CD4-positive, alpha-beta T cell (primary cell): ENCODE measurements at regions of chr6 and their contacts with region 1.

Region 1: GRCh38 chr6:27177485-27178406 is 69.8 kb upstream of the PRSS16 start:
- DNase-seq: peak; percentile 44 to 90 (median 64)
- ATAC-seq: peak; percentile 64
- H3K4me3 ChIP-seq: peak overlapping the region; percentile 89
- H3K4me3 Mint-ChIP-seq: peak overlapping the region; percentile 99
- H3K27ac ChIP-seq: peak overlapping the region; percentile 27 to 63
- H3K27ac Mint-ChIP-seq: peak overlapping the region; percentile 100
- H3K4me1 ChIP-seq: peaks cover 21% of the 10 kb centered on the region
- H3K4me1 Mint-ChIP-seq: peaks cover 24% of the 10 kb centered on the region
- H3K27me3 ChIP-seq: no peaks in the 10 kb centered on the region
- H3K27me3 Mint-ChIP-seq: peaks cover 24% of the 10 kb centered on the region
- CTCF ChIP-seq: peak; percentile 54

Region 2: DNA sequence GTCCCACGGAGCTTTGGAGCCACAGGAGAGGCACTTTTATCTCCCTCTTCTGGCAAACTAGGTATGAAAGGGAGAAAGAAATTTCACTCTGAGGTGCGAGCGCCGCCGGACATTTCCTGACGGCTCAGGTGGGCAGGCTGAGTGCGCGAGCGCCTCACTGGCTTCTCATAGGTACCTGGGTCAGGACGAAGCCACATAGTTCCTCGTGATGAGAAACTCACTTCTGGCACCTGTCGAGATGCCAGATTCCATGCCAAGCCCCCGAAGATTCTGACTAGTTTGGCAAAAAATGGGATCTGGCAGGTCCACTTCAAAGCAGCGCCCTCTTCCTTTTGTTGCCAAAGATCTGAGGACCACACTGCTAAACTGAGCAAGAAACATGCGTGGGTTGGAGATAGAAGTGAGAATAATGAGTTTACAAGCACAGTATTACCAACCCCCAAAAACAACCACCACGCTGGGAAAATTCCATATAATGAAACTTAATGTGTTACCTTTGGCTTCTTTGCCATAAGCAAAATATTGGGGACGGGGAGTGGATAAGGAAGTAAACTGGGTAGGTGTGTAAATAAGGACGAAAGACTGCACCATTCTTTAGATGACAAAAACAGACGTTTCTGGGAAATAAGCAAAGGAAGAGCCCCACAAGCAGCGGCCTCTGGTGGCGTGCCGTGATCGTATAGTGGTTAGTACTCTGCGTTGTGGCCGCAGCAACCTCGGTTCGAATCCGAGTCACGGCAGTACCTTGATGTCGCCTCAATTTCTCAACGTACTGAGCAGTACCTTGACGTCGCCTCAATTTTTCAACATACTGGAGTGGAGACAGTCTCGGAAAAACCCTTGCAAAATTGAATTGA is 20.1 kb before region 1 on chr6:
- CTCF ChIA-PET with region 1: interaction called, 14 read pairs
- POLR2A ChIA-PET with region 1: interaction called, 4 read pairs
- intact Hi-C with region 1: loop called (anchors 2 kb)
- DNase-seq: peak; percentile 73 to 93 (median 85)
- ATAC-seq: peak; percentile 88
- H3K4me3 ChIP-seq: peak overlapping the region; percentile 59
- H3K4me3 Mint-ChIP-seq: peak overlapping the region; percentile 90
- H3K27ac ChIP-seq: peak overlapping the region in 1 of 2 donors; percentile 32
- H3K27ac Mint-ChIP-seq: peak overlapping the region; percentile 96
- H3K4me1 ChIP-seq: peaks cover 22% of the 10 kb centered on the region
- H3K4me1 Mint-ChIP-seq: peaks cover 44% of the 10 kb centered on the region
- H3K27me3 ChIP-seq: no peaks in the 10 kb centered on the region
- H3K27me3 Mint-ChIP-seq: peaks cover 7% of the 10 kb centered on the region
- CTCF ChIP-seq: peak; percentile 78

Region 3: DNA sequence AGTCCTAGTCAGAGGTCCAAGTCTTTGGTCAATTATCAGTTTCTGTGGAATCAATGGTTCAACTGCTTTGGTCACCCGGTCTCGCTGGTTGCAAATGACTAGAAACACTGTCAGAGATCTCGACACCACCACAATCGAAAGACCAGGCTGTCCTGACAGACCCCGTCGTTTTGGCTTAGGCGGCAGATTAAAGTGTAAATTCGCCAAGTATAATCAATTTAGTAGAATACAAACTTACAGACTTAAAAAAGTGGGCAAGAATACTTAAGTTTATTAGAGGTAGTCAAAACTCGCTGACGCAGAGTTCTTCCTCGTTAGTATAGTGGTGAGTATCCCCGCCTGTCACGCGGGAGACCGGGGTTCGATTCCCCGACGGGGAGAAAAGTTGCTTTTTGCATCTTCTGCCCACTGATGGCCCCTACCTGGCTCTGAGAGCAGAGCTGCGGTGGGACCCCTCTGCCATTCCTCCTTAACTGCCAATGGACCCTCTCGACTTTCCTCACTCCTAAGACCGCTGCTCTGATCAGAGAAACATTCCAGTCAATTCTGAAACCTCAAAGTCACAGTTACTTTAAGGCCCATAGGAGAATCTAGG is 325.8 kb after region 1 on chr6:
- CTCF ChIA-PET with region 1: interaction called, 3 read pairs
- POLR2A ChIA-PET with region 1: no interaction called
- intact Hi-C with region 1: loop called in 1 of 2 experiments (anchors 1 kb)
- DNase-seq: peak; percentile 59 to 89 (median 75)
- ATAC-seq: peak; percentile 58
- H3K4me3 ChIP-seq: peak overlapping the region; percentile 62
- H3K4me3 Mint-ChIP-seq: peak overlapping the region; percentile 95
- H3K27ac ChIP-seq: peak overlapping the region; percentile 2 to 33
- H3K27ac Mint-ChIP-seq: peak overlapping the region; percentile 94
- H3K4me1 ChIP-seq: peaks cover 15% of the 10 kb centered on the region
- H3K4me1 Mint-ChIP-seq: peaks cover 46% of the 10 kb centered on the region
- H3K27me3 ChIP-seq: peaks cover 0 to 11% of the 10 kb centered on the region in 2 experiments
- H3K27me3 Mint-ChIP-seq: peaks cover 40% of the 10 kb centered on the region
- CTCF ChIP-seq: no peak

Region 4: GRCh38 chr6:27687154-27688013 is 509.6 kb after region 1 on chr6:
- CTCF ChIA-PET with region 1: no interaction called
- POLR2A ChIA-PET with region 1: interaction called, 8 read pairs
- intact Hi-C with region 1: loop called (anchors 1 to 5 kb)
- DNase-seq: peak; percentile 53 to 87 (median 68)
- ATAC-seq: peak; percentile 74
- H3K4me3 ChIP-seq: peak overlapping the region; percentile 88
- H3K4me3 Mint-ChIP-seq: peak overlapping the region; percentile 95
- H3K27ac ChIP-seq: peak overlapping the region in 1 of 2 donors; percentile 37
- H3K27ac Mint-ChIP-seq: peak overlapping the region; percentile 97
- H3K4me1 ChIP-seq: peaks cover 14% of the 10 kb centered on the region
- H3K4me1 Mint-ChIP-seq: peaks cover 38% of the 10 kb centered on the region
- H3K27me3 ChIP-seq: peaks cover 5 to 9% of the 10 kb centered on the region in 2 experiments
- H3K27me3 Mint-ChIP-seq: peaks cover 40% of the 10 kb centered on the region
- CTCF ChIP-seq: peak; percentile 66

Region 5: DNA sequence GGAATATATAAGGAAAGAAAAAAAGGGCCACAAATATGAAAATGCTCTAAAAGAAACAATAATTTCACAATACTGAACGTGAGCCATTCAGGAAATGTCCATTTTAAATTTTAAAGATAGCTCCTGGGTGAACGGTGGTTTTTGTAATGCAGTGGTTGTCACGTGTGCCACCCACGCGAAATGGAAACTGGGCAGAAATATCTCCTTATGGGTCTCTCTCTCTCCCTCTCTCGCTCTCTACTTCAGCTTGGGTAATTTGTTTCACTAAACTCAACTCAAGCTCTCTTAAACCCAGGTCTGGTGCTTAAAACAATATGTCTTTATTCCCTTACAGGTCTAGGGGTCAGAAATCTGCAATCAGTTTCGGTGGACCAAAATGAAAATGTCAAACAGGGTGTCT is 583.6 kb after region 1 on chr6:
- CTCF ChIA-PET with region 1: no interaction called
- POLR2A ChIA-PET with region 1: interaction called, 10 read pairs
- intact Hi-C with region 1: no loop called
- DNase-seq: peak in 2 of 14 experiments; percentile 11 to 17
- ATAC-seq: peak; percentile 41
- H3K4me3 ChIP-seq: no peak overlapping the region
- H3K4me3 Mint-ChIP-seq: peak overlapping the region; percentile 94
- H3K27ac ChIP-seq: no peak overlapping the region
- H3K27ac Mint-ChIP-seq: peak overlapping the region; percentile 98
- H3K4me1 ChIP-seq: peaks cover 14% of the 10 kb centered on the region
- H3K4me1 Mint-ChIP-seq: peaks cover 40% of the 10 kb centered on the region
- H3K27me3 ChIP-seq: no peaks in the 10 kb centered on the region
- H3K27me3 Mint-ChIP-seq: peaks cover 2% of the 10 kb centered on the region
- CTCF ChIP-seq: no peak